A549 (cell line): ENCODE measurements at regions of chr15 and their contacts with region 1.

Region 1: GRCh38 chr15:34209421-34210282 is at the start of gene KATNBL1:
- DNase-seq: peak; percentile 86 to 95
- ATAC-seq: peak; percentile 97 to 98
- H3K4me3 ChIP-seq: peak within 1 kb of the TSS; percentile 60
- H3K27ac ChIP-seq: peak within 1 kb of the TSS; percentile 89 to 94
- H3K4me1 ChIP-seq: peaks cover 12% of the 10 kb centered on the region; the same call in 2 of the 3 replicates
- CTCF ChIP-seq: peak; percentile 95
- EP300 ChIP-seq: no peak
- POLR2A ChIP-seq: peak; percentile 93
- RAD21 ChIP-seq: peak; percentile 93 to 96
- polyA plus RNA-seq, gene KATNBL1: 46.6 and 75.8 TPM in 2 replicates

Region 2: GRCh38 chr15:33746203-33746602 is 463.4 kb before region 1 on chr15:
- CTCF ChIA-PET with region 1: no interaction called
- POLR2A ChIA-PET with region 1: no interaction called
- DNase-seq: no peak
- ATAC-seq: no peak
- H3K4me3 ChIP-seq: no peak overlapping the region
- H3K27ac ChIP-seq: no peak overlapping the region
- H3K4me1 ChIP-seq: no peaks in the 10 kb centered on the region
- CTCF ChIP-seq: no peak
- EP300 ChIP-seq: no peak
- POLR2A ChIP-seq: no peak
- RAD21 ChIP-seq: no peak

Region 3: GRCh38 chr15:34101366-34102175 is 108.1 kb before region 1 on chr15 and contains the starts of genes EMC7 and PGBD4:
- CTCF ChIA-PET with region 1: interaction called, 223 read pairs
- POLR2A ChIA-PET with region 1: interaction called, 17 read pairs
- DNase-seq: peak; percentile 97 to 100
- ATAC-seq: peak; percentile 99 to 100
- H3K4me3 ChIP-seq: peak within 1 kb of the TSS; percentile 68
- H3K27ac ChIP-seq: peak within 1 kb of the TSS; percentile 85 to 89
- H3K4me1 ChIP-seq: peaks cover 22% of the 10 kb centered on the region
- CTCF ChIP-seq: no peak
- EP300 ChIP-seq: no peak
- POLR2A ChIP-seq: peak; percentile 86
- RAD21 ChIP-seq: no peak
- polyA plus RNA-seq, gene EMC7: 167 and 221 TPM in 2 replicates
- polyA plus RNA-seq, gene PGBD4: 4.5 and 4.7 TPM in 2 replicates

Region 4: DNA sequence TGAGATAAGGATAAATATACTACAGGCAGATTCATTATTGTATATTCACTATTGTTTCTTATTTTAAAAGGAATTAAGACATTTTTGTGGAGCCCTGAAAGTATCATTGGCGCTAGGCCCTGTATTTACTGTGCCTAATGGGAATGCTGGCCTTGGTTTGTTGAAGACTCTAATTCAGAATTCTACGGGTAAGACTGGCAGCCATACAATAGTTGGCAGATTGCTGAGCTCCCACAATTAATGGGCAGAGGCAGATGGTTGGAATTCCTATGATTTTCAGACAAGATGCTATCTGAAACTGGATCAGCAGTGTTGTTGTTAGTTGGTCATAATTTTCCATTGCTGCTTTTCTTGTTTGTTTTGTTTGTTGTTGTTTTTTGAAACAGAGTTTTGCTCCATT is 93.0 kb before region 1 on chr15:
- CTCF ChIA-PET with region 1: interaction called, 223 read pairs
- POLR2A ChIA-PET with region 1: interaction called, 35 read pairs
- DNase-seq: no peak
- ATAC-seq: no peak
- H3K4me3 ChIP-seq: no peak overlapping the region
- H3K27ac ChIP-seq: no peak overlapping the region
- H3K4me1 ChIP-seq: no peaks in the 10 kb centered on the region
- CTCF ChIP-seq: no peak
- EP300 ChIP-seq: no peak
- POLR2A ChIP-seq: no peak
- RAD21 ChIP-seq: no peak

Region 5: DNA sequence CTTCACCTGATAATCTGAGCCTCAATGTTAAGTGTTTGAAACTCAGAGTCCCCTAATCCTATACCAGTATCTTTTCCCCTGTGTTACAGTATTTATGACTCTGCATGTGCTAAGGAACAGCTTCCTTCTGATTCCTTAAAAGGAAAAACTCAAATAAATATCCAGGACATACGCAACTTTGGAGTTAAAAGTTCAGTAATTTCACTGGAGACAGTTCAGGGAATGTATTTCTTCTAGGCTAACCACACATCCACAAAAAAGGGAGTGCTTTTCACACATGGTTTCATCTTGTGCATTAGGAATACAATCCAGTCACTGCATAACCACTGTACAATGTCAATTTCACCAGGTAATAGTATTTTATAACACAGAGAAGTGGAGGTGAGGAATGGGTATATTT is 76.8 kb before region 1 on chr15:
- CTCF ChIA-PET with region 1: interaction called, 12 read pairs
- POLR2A ChIA-PET with region 1: no interaction called
- DNase-seq: no peak
- ATAC-seq: no peak
- H3K4me3 ChIP-seq: no peak overlapping the region
- H3K27ac ChIP-seq: no peak overlapping the region
- H3K4me1 ChIP-seq: peaks cover 15% of the 10 kb centered on the region
- CTCF ChIP-seq: no peak
- EP300 ChIP-seq: no peak
- POLR2A ChIP-seq: no peak
- RAD21 ChIP-seq: no peak